GM12878 (cell line): ENCODE measurements at regions of chr12 and their contacts with region 1.

Region 1: GRCh38 chr12:49636979-49637755 is 13.8 kb downstream of the PRPF40B start:
- DNase-seq: no peak
- ATAC-seq: peak; percentile 93
- H3K4me3 ChIP-seq: no peak overlapping the region
- H3K27ac ChIP-seq: no peak overlapping the region
- H3K4me1 ChIP-seq: peaks cover 3% of the 10 kb centered on the region; the same call in 1 of the 2 replicates
- H3K27me3 ChIP-seq: no peaks in the 10 kb centered on the region
- CTCF ChIP-seq: peak; percentile 73 to 77 (median 74)
- EP300 ChIP-seq: no peak
- POLR2A ChIP-seq: no peak; the same call in 1 of the 2 replicates
- RAD21 ChIP-seq: peak; percentile 84

Region 2: GRCh38 chr12:49623142-49623904 is 13.8 kb before region 1 on chr12 and contains the start of gene PRPF40B:
- CTCF ChIA-PET with region 1: interaction called, 57 read pairs
- POLR2A ChIA-PET with region 1: interaction called, 5 read pairs
- RAD21 ChIA-PET with region 1: no interaction called
- SMC1A ChIA-PET with region 1: interaction called, 10 read pairs
- in situ Hi-C with region 1: no loop called
- intact Hi-C with region 1: no loop called
- DNase-seq: peak; percentile 36
- ATAC-seq: peak; percentile 87
- H3K4me3 ChIP-seq: peak within 1 kb of the TSS; percentile 85
- H3K27ac ChIP-seq: peak within 1 kb of the TSS; percentile 75
- H3K4me1 ChIP-seq: peaks cover 17% of the 10 kb centered on the region
- H3K27me3 ChIP-seq: no peaks in the 10 kb centered on the region
- CTCF ChIP-seq: peak; percentile 33 to 66 (median 57)
- EP300 ChIP-seq: no peak
- POLR2A ChIP-seq: peak; percentile 90
- RAD21 ChIP-seq: peak; percentile 40; the same call in 1 of the 2 replicates
- polyA plus RNA-seq, gene PRPF40B: 0.31 to 1.2 TPM

Region 3: DNA sequence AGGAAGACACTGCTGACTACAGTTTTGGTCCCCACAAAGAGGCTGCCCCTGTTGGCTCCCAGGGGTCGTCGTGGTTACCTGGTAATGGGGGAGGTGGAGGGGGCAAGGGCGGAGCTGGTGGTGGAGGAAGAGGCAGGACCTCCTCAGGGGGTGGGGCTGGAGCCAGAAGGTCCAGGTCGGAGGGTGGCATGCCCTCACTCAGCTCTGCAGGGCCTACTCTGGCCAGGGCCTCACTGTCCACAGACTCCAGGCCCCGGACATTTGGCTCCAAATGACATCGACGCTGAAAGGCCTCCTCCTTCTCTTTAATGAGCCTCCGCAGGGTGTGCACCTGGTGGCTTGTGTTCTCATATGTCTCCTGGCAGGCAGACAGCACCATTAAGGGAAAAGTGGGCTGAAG is 14.7 kb after region 1 on chr12:
- CTCF ChIA-PET with region 1: interaction called, 13 read pairs
- POLR2A ChIA-PET with region 1: interaction called, 6 read pairs
- RAD21 ChIA-PET with region 1: interaction called, 5 read pairs
- SMC1A ChIA-PET with region 1: interaction called, 10 read pairs
- in situ Hi-C with region 1: no loop called
- intact Hi-C with region 1: no loop called
- DNase-seq: no peak
- ATAC-seq: no peak
- H3K4me3 ChIP-seq: no peak overlapping the region
- H3K27ac ChIP-seq: no peak overlapping the region
- H3K4me1 ChIP-seq: no peaks in the 10 kb centered on the region
- H3K27me3 ChIP-seq: no peaks in the 10 kb centered on the region
- CTCF ChIP-seq: no peak
- EP300 ChIP-seq: no peak
- POLR2A ChIP-seq: no peak
- RAD21 ChIP-seq: no peak

Region 4: GRCh38 chr12:49740930-49741881 is 104.0 kb after region 1 on chr12 and contains the start of gene TMBIM6:
- CTCF ChIA-PET with region 1: interaction called, 19 read pairs
- POLR2A ChIA-PET with region 1: no interaction called
- RAD21 ChIA-PET with region 1: no interaction called
- SMC1A ChIA-PET with region 1: no interaction called
- in situ Hi-C with region 1: no loop called
- intact Hi-C with region 1: no loop called
- DNase-seq: peak; percentile 99
- ATAC-seq: peak; percentile 96
- H3K4me3 ChIP-seq: peak within 1 kb of the TSS; percentile 77
- H3K27ac ChIP-seq: peak within 1 kb of the TSS; percentile 96
- H3K4me1 ChIP-seq: 0 out of 2 replicates have a peak, but pooled peaks cover 2% of the 10 kb centered on the region
- H3K27me3 ChIP-seq: no peaks in the 10 kb centered on the region
- CTCF ChIP-seq: peak; percentile 91 to 99 (median 98)
- EP300 ChIP-seq: no peak
- POLR2A ChIP-seq: peak; percentile 98
- RAD21 ChIP-seq: peak; percentile 80
- polyA plus RNA-seq, gene TMBIM6: 853 to 1,192 TPM

Region 5: DNA sequence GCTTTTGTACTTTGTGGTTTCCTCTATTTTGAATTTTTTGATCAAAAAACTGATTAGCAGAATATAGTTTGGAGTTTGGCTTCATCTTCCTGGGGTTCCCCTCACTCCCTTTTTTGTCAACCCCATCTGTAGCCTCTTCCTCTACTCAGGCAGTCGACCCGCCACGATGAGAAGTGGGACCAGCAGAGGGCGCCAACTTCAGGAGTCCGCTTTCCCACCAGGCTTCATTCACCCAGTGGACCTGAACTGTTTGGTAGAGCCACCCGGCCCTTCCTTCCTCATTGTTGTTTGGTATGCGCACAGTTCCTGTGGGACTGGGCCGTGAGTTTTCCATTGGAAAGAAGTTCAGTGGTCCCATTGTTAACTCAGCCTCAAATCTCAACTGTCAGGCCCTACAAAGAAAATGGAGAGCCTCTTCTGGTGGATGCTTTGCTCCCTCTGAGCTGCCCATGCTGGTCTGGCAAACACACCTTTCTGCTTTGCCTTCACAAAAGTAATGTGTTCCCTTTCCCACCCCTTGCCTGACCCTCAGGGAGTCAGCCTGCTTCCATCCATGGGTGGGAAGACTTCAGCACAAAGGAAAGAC is 125.9 kb after region 1 on chr12:
- CTCF ChIA-PET with region 1: interaction called, 12 read pairs
- POLR2A ChIA-PET with region 1: no interaction called
- RAD21 ChIA-PET with region 1: no interaction called
- SMC1A ChIA-PET with region 1: interaction called, 4 read pairs
- in situ Hi-C with region 1: no loop called
- intact Hi-C with region 1: no loop called
- DNase-seq: no peak
- ATAC-seq: peak; percentile 85
- H3K4me3 ChIP-seq: no peak overlapping the region
- H3K27ac ChIP-seq: peak overlapping the region; percentile 30
- H3K4me1 ChIP-seq: peaks cover 26% of the 10 kb centered on the region
- H3K27me3 ChIP-seq: no peaks in the 10 kb centered on the region
- CTCF ChIP-seq: peak; percentile 59 to 88 (median 82)
- EP300 ChIP-seq: no peak
- POLR2A ChIP-seq: no peak
- RAD21 ChIP-seq: peak; percentile 47